Panc1 (cell line): ENCODE measurements at regions of chr6 and their contacts with region 1.

Region 1: GRCh38 chr6:38493931-38494547 is 145.7 kb downstream of the BTBD9 start:
- DNase-seq: peak; percentile 60
- ATAC-seq: peak; percentile 85
- H3K4me3 ChIP-seq: no peak overlapping the region
- H3K27ac ChIP-seq: no peak overlapping the region
- H3K4me1 ChIP-seq: no peaks in the 10 kb centered on the region
- H3K27me3 ChIP-seq: no peaks in the 10 kb centered on the region
- CTCF ChIP-seq: peak; percentile 81; the same call in 1 of the 2 replicates

Region 2: DNA sequence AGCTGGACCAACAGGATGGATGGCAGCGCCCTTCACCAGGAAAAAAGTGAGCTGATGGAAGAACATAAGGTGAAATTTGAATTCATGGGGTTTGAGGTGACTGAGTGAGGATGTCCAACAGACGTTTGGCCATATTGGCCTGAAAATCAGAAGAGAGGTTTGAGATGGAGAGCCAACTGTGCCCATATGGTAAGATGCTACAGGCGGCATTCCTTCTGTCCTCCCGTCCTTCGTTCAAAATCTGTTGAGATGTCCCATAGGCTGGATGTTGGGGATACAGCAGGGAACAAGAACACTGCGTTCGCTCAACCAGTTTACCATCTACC is 1061.5 kb before region 1 on chr6:
- CTCF ChIA-PET with region 1: no interaction called
- POLR2A ChIA-PET with region 1: no interaction called
- in situ Hi-C with region 1: no loop called
- intact Hi-C with region 1: no loop called
- DNase-seq: no peak
- ATAC-seq: peak; percentile 48
- H3K4me3 ChIP-seq: peak overlapping the region; percentile 90 to 97
- H3K27ac ChIP-seq: peak overlapping the region; percentile 96
- H3K4me1 ChIP-seq: peaks cover 10% of the 10 kb centered on the region
- H3K27me3 ChIP-seq: no peaks in the 10 kb centered on the region; the same call in 1 of the 2 replicates
- CTCF ChIP-seq: no peak

Region 3: DNA sequence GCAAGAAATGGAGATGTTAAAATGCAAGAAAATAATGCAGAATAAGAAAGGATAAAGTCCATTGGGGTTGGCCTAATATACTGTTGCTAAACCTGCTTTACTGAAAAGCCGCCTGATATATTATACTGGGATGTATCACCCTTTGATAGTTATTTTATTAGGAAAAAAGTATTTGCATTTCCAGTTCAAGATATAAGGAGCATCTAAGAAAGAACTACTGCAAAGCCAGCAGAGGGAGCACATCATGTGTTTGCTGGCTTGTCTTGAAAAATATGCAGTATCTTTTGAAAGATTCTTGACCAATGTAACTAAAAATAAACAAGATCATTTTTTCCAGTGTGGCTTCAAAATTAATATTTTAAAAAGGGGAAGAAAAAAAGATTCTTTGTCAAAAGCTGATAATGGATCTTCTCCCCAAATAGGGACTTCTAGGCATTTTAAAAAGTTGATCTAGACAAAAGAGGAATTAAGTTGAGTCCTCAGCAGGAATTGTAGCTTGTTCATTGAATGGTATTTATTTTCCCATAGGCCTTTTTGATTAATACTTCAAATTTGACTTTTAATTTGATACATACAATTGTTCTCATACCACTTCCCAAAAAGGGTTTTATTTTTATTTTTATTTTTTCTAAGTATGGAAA is 459.6 kb before region 1 on chr6:
- CTCF ChIA-PET with region 1: no interaction called
- POLR2A ChIA-PET with region 1: no interaction called
- in situ Hi-C with region 1: no loop called
- intact Hi-C with region 1: loop called (anchors 10 kb)
- DNase-seq: no peak
- ATAC-seq: no peak
- H3K4me3 ChIP-seq: no peak overlapping the region
- H3K27ac ChIP-seq: no peak overlapping the region
- H3K4me1 ChIP-seq: peaks cover 10% of the 10 kb centered on the region
- H3K27me3 ChIP-seq: no peaks in the 10 kb centered on the region
- CTCF ChIP-seq: peak; percentile 63; the same call in 1 of the 2 replicates

Region 4: DNA sequence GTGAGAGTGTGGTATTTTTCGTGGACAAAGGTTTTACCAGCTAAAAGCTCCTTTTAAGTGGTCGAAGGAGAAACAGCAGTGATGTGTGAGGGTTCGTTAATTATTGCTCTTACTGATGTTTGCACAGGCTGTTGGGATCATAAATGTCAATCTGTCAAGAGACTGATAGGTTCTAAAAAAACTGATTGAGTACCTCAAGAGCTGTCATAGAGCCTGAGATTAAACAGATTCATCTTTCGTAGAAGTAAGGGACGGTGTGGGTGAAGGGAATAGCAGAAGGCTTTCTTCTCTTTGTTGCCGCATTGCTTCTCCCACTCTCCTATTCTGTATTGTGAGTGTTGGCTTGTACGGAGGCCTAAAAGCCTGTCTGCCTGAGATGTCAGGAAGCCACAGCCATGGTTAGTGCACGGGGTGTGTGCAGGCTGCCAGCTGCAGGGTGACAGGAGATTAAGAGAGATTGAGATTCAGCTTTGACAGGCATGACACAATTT is 383.5 kb before region 1 on chr6:
- CTCF ChIA-PET with region 1: no interaction called
- POLR2A ChIA-PET with region 1: no interaction called
- in situ Hi-C with region 1: no loop called
- intact Hi-C with region 1: no loop called
- DNase-seq: no peak
- ATAC-seq: no peak
- H3K4me3 ChIP-seq: no peak overlapping the region
- H3K27ac ChIP-seq: no peak overlapping the region
- H3K4me1 ChIP-seq: no peaks in the 10 kb centered on the region
- H3K27me3 ChIP-seq: no peaks in the 10 kb centered on the region
- CTCF ChIP-seq: no peak

Region 5: DNA sequence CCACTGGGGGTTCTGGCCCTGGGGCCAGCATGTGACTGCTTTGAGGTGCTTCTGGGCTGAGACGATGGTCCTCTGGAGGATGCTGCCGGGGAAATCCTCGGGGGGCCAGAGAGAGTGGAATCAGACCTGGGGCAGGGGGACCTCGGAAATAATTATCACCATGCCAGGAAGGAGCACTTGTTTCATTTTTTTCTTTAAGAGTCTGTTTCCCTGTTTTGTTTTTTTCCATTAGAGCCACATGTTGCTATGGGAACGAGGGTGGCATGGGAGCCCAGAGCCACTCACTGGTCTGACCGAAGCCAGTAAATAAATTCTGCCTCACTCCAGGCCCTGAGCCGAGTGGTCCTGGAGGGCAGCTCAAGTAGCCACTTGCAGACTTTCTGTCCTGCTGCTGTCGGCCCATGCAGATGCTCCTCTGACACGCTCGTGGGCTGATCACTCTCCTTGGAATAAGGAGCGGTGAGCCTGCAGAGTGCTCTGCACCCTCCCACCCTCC is 309.4 kb before region 1 on chr6:
- CTCF ChIA-PET with region 1: no interaction called
- POLR2A ChIA-PET with region 1: no interaction called
- in situ Hi-C with region 1: no loop called
- intact Hi-C with region 1: loop called (anchors 5 kb)
- DNase-seq: no peak
- ATAC-seq: no peak
- H3K4me3 ChIP-seq: no peak overlapping the region
- H3K27ac ChIP-seq: no peak overlapping the region
- H3K4me1 ChIP-seq: no peaks in the 10 kb centered on the region
- H3K27me3 ChIP-seq: no peaks in the 10 kb centered on the region
- CTCF ChIP-seq: no peak

Region 6: GRCh38 chr6:38413102-38413800 is 80.8 kb before region 1 on chr6:
- CTCF ChIA-PET with region 1: no interaction called
- POLR2A ChIA-PET with region 1: no interaction called
- in situ Hi-C with region 1: no loop called
- intact Hi-C with region 1: no loop called
- DNase-seq: no peak
- ATAC-seq: no peak
- H3K4me3 ChIP-seq: no peak overlapping the region
- H3K27ac ChIP-seq: no peak overlapping the region
- H3K4me1 ChIP-seq: no peaks in the 10 kb centered on the region
- H3K27me3 ChIP-seq: no peaks in the 10 kb centered on the region
- CTCF ChIP-seq: no peak